Dendritic cell treated with granulocyte-macrophage colony-stimulating factor and Interleukin-4, amounts not matched to agents 40 ng/mL and 50 ng/mL, for 4 days (primary cell): ENCODE measurements at regions of chr5 and their contacts with region 1.

Region 1: DNA sequence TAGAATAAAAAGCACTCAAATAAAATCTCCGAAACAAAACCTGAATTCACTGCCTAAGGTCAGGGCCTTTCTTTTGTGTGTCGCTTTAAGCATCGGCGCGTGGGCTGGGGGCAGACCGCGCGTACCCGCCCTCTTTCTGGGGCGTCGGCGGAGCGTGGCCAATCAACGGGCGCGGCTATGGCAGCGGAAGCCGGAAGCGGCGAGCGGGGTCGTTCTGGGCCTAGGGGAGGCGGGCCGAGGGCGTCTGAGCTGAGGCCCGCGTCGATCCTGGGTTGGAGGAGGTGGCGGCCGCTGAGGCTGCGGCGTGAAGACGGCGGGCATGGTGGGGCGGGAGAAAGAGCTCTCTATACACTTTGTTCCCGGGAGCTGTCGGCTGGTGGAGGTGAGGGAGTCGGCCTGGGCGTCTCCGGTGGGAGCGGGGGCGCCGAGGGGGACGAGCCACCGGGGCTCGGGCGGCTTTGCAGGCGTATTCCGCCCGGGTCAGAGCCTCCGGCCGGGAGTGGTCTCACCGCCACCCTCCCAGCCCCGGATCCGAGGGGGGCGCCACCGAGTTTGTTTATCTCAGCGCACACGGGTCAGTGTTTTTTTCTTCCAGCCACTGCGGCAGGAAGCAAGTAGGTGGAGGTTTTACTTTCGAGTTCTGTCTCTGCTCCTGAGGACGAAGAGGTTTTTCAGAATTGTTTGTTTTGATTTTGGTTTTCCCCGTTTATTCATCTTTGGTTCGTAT is at the start of gene MAT2B:
- H3K4me3 Mint-ChIP-seq: peak within 1 kb of the TSS; percentile 88
- H3K27ac Mint-ChIP-seq: peak within 1 kb of the TSS; percentile 99
- H3K4me1 Mint-ChIP-seq: peaks cover 13% of the 10 kb centered on the region
- H3K27me3 Mint-ChIP-seq: no peaks in the 10 kb centered on the region

Region 2: DNA sequence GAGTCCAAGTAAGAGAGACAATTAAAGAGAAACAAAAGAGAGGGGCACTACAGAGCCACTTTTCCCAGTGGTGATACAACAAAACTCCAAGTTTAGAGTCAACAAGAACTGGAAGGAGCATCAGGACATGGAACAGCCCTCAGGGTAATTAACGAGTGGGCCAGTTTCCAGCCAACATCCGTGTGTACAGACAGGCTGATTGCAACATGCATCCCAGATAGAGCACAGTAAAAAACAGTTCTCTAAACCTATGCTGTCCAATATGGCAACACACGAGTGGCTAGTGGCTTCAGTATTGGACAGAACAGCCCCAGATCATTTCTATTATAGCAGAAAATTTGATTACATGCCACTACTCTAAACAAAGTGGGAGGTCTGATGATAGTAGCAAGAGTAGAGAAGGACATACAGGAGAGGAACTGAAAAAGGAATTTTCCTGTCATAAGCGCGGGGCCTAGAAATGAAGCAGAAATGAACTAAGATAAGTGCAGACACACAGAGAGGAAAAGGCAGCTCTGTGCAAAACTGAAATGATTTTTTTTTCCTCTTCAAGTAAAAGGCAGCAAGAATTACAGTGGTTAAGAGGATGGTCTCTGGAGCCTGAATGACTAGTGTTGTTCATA is 243.8 kb before region 1 on chr5:
- intact Hi-C with region 1: no loop called
- H3K4me3 Mint-ChIP-seq: no peak overlapping the region
- H3K27ac Mint-ChIP-seq: no peak overlapping the region
- H3K4me1 Mint-ChIP-seq: no peaks in the 10 kb centered on the region
- H3K27me3 Mint-ChIP-seq: no peaks in the 10 kb centered on the region

Region 3: DNA sequence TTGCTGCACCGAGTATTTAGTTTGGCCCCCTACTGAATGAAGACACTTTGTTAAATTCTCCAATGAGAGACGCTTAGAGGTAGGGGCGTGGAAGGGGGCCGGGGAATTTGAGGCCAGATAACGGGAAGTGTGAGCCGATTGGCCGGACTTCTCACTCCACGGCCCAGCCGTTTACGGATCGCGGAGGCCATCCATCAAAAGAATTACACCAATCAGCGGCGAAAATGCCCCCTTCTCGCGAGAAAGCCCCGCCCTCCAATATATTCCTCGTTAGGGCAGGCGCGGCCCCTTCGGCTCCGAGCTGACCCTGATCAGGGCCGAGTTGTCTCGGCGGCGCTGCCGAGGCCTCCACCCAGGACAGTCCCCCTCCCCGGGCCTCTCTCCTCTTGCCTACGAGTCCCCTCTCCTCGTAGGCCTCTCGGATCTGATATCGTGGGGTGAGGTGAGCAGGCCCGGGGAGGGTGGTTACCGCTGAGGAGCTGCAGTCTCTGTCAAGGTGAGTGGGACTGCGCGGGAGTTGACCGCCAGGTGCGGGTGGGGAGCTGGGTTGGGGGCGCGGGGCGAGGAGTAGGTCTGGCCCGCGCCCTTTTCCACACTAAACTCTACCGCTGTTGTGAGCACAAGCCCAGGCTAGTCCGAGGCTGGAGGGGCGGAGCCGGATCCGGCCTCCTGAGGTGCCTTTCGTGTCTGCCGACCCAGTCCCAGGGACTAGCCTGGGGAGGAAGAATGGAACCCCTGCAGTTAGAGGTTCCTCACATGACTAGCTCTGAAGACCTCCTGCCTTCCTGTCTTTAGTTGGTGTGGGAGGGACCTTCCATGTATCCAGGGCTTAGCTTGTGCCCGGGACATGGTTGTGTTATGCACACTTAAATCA is 68.0 kb before region 1 on chr5 and contains the start of gene CCNG1:
- intact Hi-C with region 1: loop called (anchors 1 kb)
- H3K4me3 Mint-ChIP-seq: peak within 1 kb of the TSS; percentile 86
- H3K27ac Mint-ChIP-seq: peak within 1 kb of the TSS; percentile 91
- H3K4me1 Mint-ChIP-seq: peaks cover 32% of the 10 kb centered on the region
- H3K27me3 Mint-ChIP-seq: no peaks in the 10 kb centered on the region